Gastrocnemius medialis (tissue), 4 donors: ENCODE measurements at regions of chr4 and their contacts with region 1.

Region 1: GRCh38 chr4:54233277-54233696 is 4.2 kb downstream of the PDGFRA start:
- DNase-seq: peak; percentile 56 to 66
- ATAC-seq: peak; percentile 72 to 79
- H3K4me3 ChIP-seq: peak overlapping the region; percentile 55 to 86 (median 62)
- H3K27ac ChIP-seq: peak overlapping the region; percentile 58 to 60 (median 59)
- H3K4me1 ChIP-seq: peaks cover 12 to 38% of the 10 kb centered on the region in 2 donors
- H3K27me3 ChIP-seq: peaks cover 44 to 47% (median 46%) of the 10 kb centered on the region in 3 donors
- CTCF ChIP-seq: peak; percentile 79 to 90 (median 84)
- POLR2A ChIP-seq: no peak

Region 2: GRCh38 chr4:52376132-52376704 is 1857.1 kb before region 1 on chr4:
- in situ Hi-C with region 1: loop called in 1 of 4 experiments (anchors 25 kb)
- intact Hi-C with region 1: no loop called
- DNase-seq: no peak
- ATAC-seq: no peak
- H3K4me3 ChIP-seq: no peak overlapping the region
- H3K27ac ChIP-seq: no peak overlapping the region
- H3K4me1 ChIP-seq: no peaks in the 10 kb centered on the region
- H3K27me3 ChIP-seq: no peaks in the 10 kb centered on the region
- CTCF ChIP-seq: peak; percentile 32 to 63 (median 42)
- POLR2A ChIP-seq: no peak

Region 3: GRCh38 chr4:53015681-53016080 is 1217.6 kb before region 1 on chr4:
- in situ Hi-C with region 1: loop called in 3 of 4 experiments (anchors 10 to 25 kb)
- intact Hi-C with region 1: loop called (anchors 5 kb)
- DNase-seq: no peak
- ATAC-seq: no peak
- H3K4me3 ChIP-seq: no peak overlapping the region
- H3K27ac ChIP-seq: peak overlapping the region in 2 of 4 donors; percentile 6 to 28
- H3K4me1 ChIP-seq: peaks cover 18 to 45% of the 10 kb centered on the region in 2 donors
- H3K27me3 ChIP-seq: no peaks in the 10 kb centered on the region
- CTCF ChIP-seq: peak in 4 of 5 experiments; percentile 47 to 66 (median 59)
- POLR2A ChIP-seq: no peak

Region 4: DNA sequence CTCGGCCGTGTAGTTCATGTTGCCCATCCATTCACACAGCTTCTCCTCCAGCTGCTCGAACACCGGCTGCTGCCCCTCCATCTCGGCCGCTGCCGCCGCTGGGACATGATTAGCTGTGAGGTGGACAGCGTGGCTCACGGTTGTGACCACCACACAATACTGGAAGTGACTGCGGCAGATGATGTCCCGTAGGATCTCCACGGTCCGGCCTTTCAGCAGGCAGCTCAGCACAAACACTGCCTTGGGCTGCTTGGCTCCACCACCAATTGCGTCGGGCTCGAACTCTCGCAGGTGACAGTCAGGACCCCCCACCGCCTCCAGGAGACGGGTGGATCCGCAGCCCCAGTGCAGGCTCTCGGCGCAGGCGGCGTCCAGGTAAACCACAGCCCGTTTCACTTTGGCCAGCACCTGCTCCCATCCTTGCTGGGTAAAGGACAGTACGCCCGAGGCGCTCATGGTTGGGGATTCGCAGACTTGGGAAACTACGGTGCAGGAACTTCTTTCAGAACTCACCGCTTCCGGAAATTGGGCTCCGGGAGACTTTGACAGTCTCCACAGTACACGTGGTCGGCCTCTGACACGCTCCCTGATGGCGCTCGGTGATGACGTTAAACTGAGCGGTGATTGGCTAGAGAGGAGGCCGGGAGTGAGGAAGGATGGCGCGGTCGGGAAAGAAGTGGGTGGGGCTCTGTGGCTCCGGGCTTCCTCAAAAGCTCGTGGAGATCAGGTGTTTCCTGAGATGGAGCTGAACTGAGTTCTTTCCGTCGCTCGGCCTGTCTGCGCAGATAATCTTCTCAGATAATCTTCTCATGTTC is 867.6 kb before region 1 on chr4 and contains the start of gene SCFD2:
- in situ Hi-C with region 1: loop called in 1 of 4 experiments (anchors 25 kb)
- intact Hi-C with region 1: no loop called
- DNase-seq: peak; percentile 96
- ATAC-seq: peak; percentile 100
- H3K4me3 ChIP-seq: peak within 1 kb of the TSS; percentile 64 to 98 (median 88)
- H3K27ac ChIP-seq: peak within 1 kb of the TSS; percentile 56 to 78 (median 68)
- H3K4me1 ChIP-seq: peaks cover 16 to 23% of the 10 kb centered on the region in 2 donors
- H3K27me3 ChIP-seq: peaks cover 2 to 13% (median 5%) of the 10 kb centered on the region in 3 donors
- CTCF ChIP-seq: no peak
- POLR2A ChIP-seq: peak; percentile 22 to 51
- total RNA-seq, gene SCFD2: 8.9 to 16.0 (median 14.8) TPM

Region 5: DNA sequence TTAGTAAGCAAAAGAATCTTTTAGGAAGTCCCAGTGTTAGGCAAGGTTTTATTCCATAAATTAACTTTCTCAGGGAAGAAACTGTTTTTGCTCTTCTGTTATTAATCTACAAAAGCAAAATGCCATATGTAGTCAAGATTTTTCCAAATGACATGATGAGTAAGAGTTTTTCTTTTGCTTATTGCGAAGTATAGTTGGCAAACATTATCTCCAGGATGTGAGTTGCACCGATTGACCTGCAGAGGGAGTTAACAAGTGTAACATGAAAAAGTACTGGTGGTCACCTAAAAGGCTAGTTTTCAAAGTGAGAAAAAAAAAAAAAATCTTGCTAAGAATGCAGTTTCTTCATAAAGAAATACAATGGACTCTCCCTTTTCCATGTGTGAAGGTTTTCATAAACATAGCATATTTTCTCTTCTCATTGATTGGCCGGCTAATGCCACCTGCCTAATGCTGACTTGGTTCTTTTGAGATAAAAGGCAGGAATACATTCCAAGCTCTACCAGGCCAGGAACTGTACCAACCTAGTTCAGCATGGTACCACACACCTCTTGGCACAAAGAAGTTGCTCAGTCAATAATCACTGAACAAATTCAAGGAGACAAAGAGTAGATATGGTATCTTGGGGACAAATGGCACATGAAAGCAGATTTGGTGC is 742.2 kb before region 1 on chr4:
- in situ Hi-C with region 1: loop called in 1 of 4 experiments (anchors 10 kb)
- intact Hi-C with region 1: loop called (anchors 1 kb)
- DNase-seq: peak in 1 of 2 donors; percentile 48
- ATAC-seq: peak; percentile 68 to 81
- H3K4me3 ChIP-seq: no peak overlapping the region
- H3K27ac ChIP-seq: peak overlapping the region in 1 of 4 donors; percentile 3
- H3K4me1 ChIP-seq: peaks cover 5 to 11% of the 10 kb centered on the region in 2 donors
- H3K27me3 ChIP-seq: no peaks in the 10 kb centered on the region
- CTCF ChIP-seq: peak; percentile 30 to 62 (median 50)
- POLR2A ChIP-seq: no peak

Region 6: GRCh38 chr4:54281054-54281766 is 47.9 kb after region 1 on chr4:
- in situ Hi-C with region 1: no loop called
- intact Hi-C with region 1: loop called (anchors 1 kb)
- DNase-seq: peak; percentile 72 to 80
- ATAC-seq: peak; percentile 93 to 96
- H3K4me3 ChIP-seq: no peak overlapping the region
- H3K27ac ChIP-seq: peak overlapping the region; percentile 76 to 82 (median 78)
- H3K4me1 ChIP-seq: peaks cover 34 to 37% of the 10 kb centered on the region in 2 donors
- H3K27me3 ChIP-seq: no peaks in the 10 kb centered on the region
- CTCF ChIP-seq: no peak
- POLR2A ChIP-seq: no peak